ENCODE measurements at regions of chr4 and their contacts with region 1.

Region 1: GRCh38 chr4:74370912-74371311 is 6.0 kb downstream of the EREG start:
- DNase-seq: no peak
- H3K4me3 ChIP-seq: no peak overlapping the region
- H3K27ac ChIP-seq: no peak overlapping the region
- H3K4me1 ChIP-seq: peaks cover under 1 to 28% (median 4%) of the 10 kb centered on the region in 3 donors
- H3K27me3 ChIP-seq: peaks cover 0 to 11% (median 0%) of the 10 kb centered on the region in 4 donors
- CTCF ChIP-seq: peak in 5 of 6 experiments; percentile 42 to 73 (median 51)
- POLR2A ChIP-seq: no peak

Region 2: DNA sequence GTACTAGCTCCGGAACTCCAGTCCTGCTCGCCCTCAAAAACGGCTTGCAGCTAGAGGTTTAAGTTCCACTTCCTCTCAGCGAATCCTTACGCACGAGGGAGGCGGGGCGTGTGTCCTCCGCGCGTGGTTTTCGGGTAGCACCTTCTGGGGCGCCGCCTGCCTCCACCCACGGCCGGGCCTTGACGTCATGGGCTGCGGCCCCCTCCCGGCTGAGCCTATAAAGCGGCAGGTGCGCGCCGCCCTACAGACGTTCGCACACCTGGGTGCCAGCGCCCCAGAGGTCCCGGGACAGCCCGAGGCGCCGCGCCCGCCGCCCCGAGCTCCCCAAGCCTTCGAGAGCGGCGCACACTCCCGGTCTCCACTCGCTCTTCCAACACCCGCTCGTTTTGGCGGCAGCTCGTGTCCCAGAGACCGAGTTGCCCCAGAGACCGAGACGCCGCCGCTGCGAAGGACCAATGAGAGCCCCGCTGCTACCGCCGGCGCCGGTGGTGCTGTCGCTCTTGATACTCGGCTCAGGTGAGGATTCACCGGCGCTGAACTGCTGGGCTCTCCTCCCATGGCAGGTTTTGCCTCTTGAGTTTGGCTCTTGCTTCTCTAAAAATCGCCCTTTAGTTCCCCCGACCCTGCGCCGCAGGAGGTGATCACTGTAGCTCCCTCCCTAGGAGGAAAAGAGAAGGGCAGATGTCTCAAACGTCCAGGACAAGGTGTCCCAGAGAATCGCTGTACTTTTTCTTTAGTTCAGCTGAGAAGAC is 74.2 kb after region 1 on chr4 and contains the start of gene AREG:
- intact Hi-C with region 1: loop called (anchors 10 kb)
- DNase-seq: peak; percentile 43
- H3K4me3 ChIP-seq: peak within 1 kb of the TSS; percentile 52 to 80 (median 68)
- H3K27ac ChIP-seq: peak within 1 kb of the TSS; percentile 91 to 94 (median 92)
- H3K4me1 ChIP-seq: peaks cover 3 to 44% (median 4%) of the 10 kb centered on the region in 3 donors
- H3K27me3 ChIP-seq: no peaks in the 10 kb centered on the region
- CTCF ChIP-seq: peak in 5 of 6 experiments; percentile 41 to 67 (median 55)
- POLR2A ChIP-seq: peak; percentile 12 to 96 (median 78)
- total RNA-seq, gene AREG: 16.6 to 51.4 (median 36.3) TPM

Region 3: GRCh38 chr4:74531963-74532794 is 161.3 kb after region 1 on chr4:
- intact Hi-C with region 1: loop called (anchors 10 kb)
- DNase-seq: no peak
- H3K4me3 ChIP-seq: no peak overlapping the region
- H3K27ac ChIP-seq: no peak overlapping the region
- H3K4me1 ChIP-seq: peaks cover 0 to 12% (median 0%) of the 10 kb centered on the region in 3 donors
- H3K27me3 ChIP-seq: no peaks in the 10 kb centered on the region
- CTCF ChIP-seq: peak in 5 of 6 experiments; percentile 22 to 75 (median 56)
- POLR2A ChIP-seq: no peak

Region 4: DNA sequence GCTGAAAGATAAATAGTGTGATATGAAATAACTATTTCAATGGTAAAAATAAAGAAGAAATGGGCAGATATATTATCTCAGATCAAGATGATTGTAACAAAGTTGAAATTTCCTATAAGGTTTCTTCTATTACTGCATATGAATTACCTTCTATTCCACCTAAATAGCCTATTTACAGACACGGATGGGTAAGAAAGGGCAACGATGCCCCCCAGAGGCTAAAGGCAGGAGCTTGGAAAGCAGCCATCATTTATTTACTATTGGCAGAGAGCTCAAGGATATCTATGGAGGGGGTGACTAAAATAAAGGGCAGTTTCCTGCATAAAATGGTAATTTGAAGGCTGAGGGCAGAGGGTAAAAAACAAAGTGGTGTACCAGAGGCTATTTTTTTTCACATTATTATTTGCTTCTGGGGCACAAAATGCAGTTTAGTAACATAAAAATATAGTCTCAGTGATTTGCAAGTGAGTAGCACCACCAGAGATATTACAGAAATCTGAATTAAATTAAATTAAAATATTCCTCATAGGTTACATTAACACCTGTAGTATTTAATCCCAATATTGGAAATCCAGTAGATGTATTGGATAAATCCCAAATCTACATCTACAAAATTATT is 300.3 kb after region 1 on chr4:
- intact Hi-C with region 1: loop called (anchors 5 kb)
- DNase-seq: peak; percentile 2
- H3K4me3 ChIP-seq: no peak overlapping the region
- H3K27ac ChIP-seq: no peak overlapping the region
- H3K4me1 ChIP-seq: peaks cover 0 to 9% (median 0%) of the 10 kb centered on the region in 3 donors
- H3K27me3 ChIP-seq: no peaks in the 10 kb centered on the region
- CTCF ChIP-seq: peak; percentile 32 to 81 (median 43)
- POLR2A ChIP-seq: no peak